Heart left ventricle (tissue), 16 donors: ENCODE measurements at regions of chr10 and their contacts with region 1.

Region 1: GRCh38 chr10:123582084-123582989 is 83.8 kb upstream of the GPR26 start:
- DNase-seq: peak; percentile 58 to 77 (median 73)
- ATAC-seq: peak in 3 of 4 donors; percentile 69 to 79 (median 70)
- H3K4me3 ChIP-seq: no peak overlapping the region
- H3K27ac ChIP-seq: no peak overlapping the region
- H3K4me1 ChIP-seq: peaks cover 0 to 11% (median 0%) of the 10 kb centered on the region in 12 donors
- H3K27me3 ChIP-seq: peaks cover 0 to 59% (median 21%) of the 10 kb centered on the region in 9 donors
- CTCF ChIP-seq: peak; percentile 68 to 89 (median 77)
- POLR2A ChIP-seq: no peak

Region 2: GRCh38 chr10:123309731-123310130 is 272.6 kb before region 1 on chr10:
- intact Hi-C with region 1: no loop called
- DNase-seq: no peak
- ATAC-seq: peak in 1 of 4 donors; percentile 55
- H3K4me3 ChIP-seq: no peak overlapping the region
- H3K27ac ChIP-seq: peak overlapping the region in 1 of 12 donors; percentile 11
- H3K4me1 ChIP-seq: no peaks in the 10 kb centered on the region
- H3K27me3 ChIP-seq: no peaks in the 10 kb centered on the region
- CTCF ChIP-seq: no peak
- POLR2A ChIP-seq: no peak

Region 3: DNA sequence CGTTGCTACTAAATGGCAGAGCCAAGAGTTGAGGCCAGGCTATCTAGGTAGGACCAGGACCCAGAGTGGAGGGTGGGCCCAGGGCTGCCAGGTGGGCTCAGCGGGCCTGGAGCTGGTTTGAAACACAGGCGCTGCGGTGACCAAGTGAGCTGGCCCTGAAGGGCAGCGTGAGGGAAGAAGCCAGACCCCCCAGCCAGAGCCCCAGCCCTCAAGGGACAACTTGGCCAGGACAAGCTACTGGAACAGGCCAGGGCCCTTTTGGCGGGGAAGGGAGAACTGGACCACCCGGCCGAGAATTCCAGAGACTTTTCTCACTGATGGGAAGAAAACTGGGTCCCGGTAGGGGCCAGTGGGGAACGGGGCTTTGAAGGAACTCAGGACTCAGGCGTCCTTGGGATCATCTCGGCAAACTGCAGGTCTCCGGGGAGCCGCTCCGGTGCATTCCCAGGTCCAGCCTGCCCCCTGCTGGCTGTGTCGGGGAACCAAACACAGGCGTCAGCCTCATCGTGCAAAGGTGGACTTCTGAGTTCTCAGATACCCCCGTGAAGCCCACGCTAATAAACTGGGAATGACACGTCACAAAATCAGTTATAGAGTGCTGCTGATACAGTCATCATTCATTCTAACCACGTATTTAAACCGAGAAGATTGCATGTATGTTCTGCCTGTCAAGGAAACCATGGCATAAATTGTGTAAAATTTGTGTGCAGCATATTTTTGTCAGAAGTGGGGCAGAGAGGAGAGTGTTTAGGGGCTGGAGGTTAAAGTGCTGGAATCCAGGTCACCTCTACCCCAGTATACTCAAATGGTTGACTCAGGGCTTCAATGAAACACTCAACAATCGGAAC is 385.3 kb after region 1 on chr10:
- intact Hi-C with region 1: loop called (anchors 1 to 2 kb)
- DNase-seq: peak; percentile 56 to 83 (median 67)
- ATAC-seq: peak in 3 of 4 donors; percentile 75 to 86 (median 76)
- H3K4me3 ChIP-seq: peak overlapping the region in 1 of 12 donors; percentile 26
- H3K27ac ChIP-seq: no peak overlapping the region
- H3K4me1 ChIP-seq: peaks cover 0 to 6% (median 0%) of the 10 kb centered on the region in 12 donors
- H3K27me3 ChIP-seq: peaks cover 0 to 65% (median 42%) of the 10 kb centered on the region in 9 donors
- CTCF ChIP-seq: peak; percentile 79 to 94 (median 84)
- POLR2A ChIP-seq: no peak